Activated CD4-positive, alpha-beta T cell treated with anti-CD3 and anti-CD28 coated beads for 36 hours (primary cell): ENCODE measurements at regions of chr7 and their contacts with region 1.

Region 1: DNA sequence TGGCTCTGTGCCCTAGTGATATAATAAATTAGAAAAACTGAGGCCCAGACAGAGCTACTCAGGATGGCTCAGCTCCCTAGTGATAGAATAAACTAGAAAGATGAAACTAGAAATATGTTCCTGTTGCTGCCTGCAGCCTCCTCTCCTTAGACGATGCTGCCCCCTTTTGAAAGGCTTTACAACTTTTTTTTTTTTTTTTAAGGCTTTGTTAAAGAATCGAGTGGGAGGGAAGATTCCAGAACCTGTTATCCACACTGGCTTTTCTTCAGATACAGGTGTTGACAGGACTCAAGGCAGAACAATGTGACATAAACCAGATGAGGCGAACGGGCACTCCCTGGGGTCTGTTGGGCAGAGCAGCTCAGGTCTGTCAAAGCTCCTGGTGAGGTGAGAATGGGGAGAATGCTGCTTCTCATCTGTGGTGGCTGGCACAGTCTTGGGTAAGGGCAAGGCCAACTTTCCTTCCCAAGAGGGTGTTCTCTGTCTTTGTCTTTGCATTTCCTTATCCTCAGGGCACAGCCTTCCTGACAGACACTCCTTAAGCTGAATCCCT is 175.1 kb downstream of the COBL start:
- DNase-seq: peak; percentile 40
- ATAC-seq: peak; percentile 77
- H3K4me3 Mint-ChIP-seq: no peak overlapping the region
- H3K27ac Mint-ChIP-seq: no peak overlapping the region
- H3K4me1 Mint-ChIP-seq: peaks cover 23% of the 10 kb centered on the region
- H3K27me3 Mint-ChIP-seq: peaks cover 3% of the 10 kb centered on the region

Region 2: DNA sequence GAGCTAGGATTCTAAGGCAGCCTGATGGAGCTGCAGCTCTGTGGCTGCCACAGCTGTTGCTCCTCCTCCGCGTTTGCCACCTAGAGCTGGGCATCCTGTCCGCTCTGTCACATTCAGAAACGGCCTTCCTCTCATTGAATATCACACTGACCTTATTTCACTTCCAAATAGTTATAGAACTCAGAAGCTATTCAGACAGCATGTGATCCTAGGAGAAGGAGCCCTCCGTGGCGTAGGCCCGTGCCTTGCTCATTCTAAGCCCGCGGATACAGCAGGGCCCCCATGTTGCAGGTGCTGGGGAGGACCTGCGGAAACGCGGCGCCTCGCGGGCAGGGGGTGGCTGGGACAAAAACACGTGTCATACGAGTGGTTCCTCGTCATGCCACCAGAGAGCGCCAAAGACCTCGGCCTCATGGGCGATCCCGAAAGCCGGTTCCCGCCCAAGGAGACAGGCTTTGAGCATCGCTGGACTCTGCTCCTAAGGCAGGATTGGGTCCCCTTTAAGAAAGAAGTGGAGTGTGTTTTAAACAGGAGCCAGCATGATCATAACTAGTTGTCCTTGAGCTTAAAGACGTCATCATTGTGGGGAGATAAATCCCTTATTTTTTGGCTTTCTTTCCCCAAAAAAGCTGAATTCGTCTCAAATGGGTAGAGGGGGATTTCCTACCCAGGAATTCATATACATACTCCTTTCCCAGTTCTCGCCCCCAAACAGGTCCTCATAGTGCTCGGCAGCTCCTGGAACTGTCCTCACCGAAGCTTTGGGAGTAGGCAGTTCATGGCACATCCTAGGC is 673.5 kb before region 1 on chr7:
- CTCF ChIA-PET with region 1: interaction called, 7 read pairs
- POLR2A ChIA-PET with region 1: no interaction called
- intact Hi-C with region 1: loop called (anchors 1 kb)
- DNase-seq: peak; percentile 92
- ATAC-seq: peak; percentile 95
- H3K4me3 Mint-ChIP-seq: peak overlapping the region; percentile 11
- H3K27ac Mint-ChIP-seq: peak overlapping the region; percentile 59
- H3K4me1 Mint-ChIP-seq: peaks cover 13% of the 10 kb centered on the region
- H3K27me3 Mint-ChIP-seq: peaks cover 5% of the 10 kb centered on the region

Region 3: GRCh38 chr7:50696810-50697582 is 444.5 kb before region 1 on chr7:
- CTCF ChIA-PET with region 1: interaction called, 5 read pairs
- POLR2A ChIA-PET with region 1: no interaction called
- intact Hi-C with region 1: loop called (anchors 1 to 10 kb)
- DNase-seq: peak; percentile 27
- ATAC-seq: peak; percentile 33
- H3K4me3 Mint-ChIP-seq: no peak overlapping the region
- H3K27ac Mint-ChIP-seq: no peak overlapping the region
- H3K4me1 Mint-ChIP-seq: peaks cover 13% of the 10 kb centered on the region
- H3K27me3 Mint-ChIP-seq: peaks cover 3% of the 10 kb centered on the region

Region 4: DNA sequence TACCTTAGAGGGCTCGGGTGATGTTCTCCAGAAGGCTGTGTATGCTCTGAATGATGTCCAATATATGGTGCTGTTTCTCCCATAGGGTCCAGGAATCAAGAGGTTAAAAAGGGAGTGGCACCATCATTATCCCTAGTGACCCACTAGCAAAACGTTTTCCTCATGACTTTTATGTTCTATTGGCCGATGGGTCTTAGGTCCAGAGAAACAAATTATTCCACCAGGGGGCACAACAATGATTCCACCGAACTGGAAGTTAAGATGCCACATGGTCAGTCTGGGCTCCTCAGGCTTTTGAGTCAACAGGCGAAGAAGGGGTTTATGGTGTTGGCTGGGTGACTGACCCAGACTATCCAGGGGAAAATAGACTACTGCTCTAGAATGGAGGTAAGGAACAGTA is 81.0 kb before region 1 on chr7:
- CTCF ChIA-PET with region 1: interaction called, 6 read pairs
- POLR2A ChIA-PET with region 1: no interaction called
- intact Hi-C with region 1: loop called (anchors 2 to 5 kb)
- DNase-seq: no peak
- ATAC-seq: no peak
- H3K4me3 Mint-ChIP-seq: no peak overlapping the region
- H3K27ac Mint-ChIP-seq: no peak overlapping the region
- H3K4me1 Mint-ChIP-seq: no peaks in the 10 kb centered on the region
- H3K27me3 Mint-ChIP-seq: no peaks in the 10 kb centered on the region

Region 5: DNA sequence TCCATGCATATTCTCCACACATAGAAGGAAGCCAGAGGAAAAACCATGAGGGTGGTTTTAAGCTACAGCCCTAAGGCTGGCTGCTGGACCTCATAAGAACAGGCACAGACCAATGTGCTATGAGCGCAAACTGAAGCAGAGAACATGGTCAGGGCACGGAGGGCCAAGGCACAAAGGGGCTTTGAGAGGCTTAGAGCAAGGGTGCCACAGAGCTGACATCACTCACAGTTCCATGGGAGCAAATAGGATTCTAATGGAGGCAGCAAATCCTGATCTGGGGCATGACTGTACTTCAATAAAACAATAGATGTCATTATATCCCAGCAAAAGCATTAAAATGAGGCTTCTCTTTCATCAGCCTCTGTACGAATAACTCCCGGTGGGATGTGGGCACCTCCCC is 12.7 kb after region 1 on chr7:
- CTCF ChIA-PET with region 1: interaction called, 72 read pairs
- POLR2A ChIA-PET with region 1: no interaction called
- intact Hi-C with region 1: no loop called
- DNase-seq: no peak
- ATAC-seq: no peak
- H3K4me3 Mint-ChIP-seq: no peak overlapping the region
- H3K27ac Mint-ChIP-seq: no peak overlapping the region
- H3K4me1 Mint-ChIP-seq: no peaks in the 10 kb centered on the region
- H3K27me3 Mint-ChIP-seq: peaks cover 3% of the 10 kb centered on the region

Region 6: GRCh38 chr7:51324206-51324884 is 182.8 kb after region 1 on chr7:
- CTCF ChIA-PET with region 1: no interaction called
- POLR2A ChIA-PET with region 1: no interaction called
- intact Hi-C with region 1: no loop called
- DNase-seq: no peak
- ATAC-seq: no peak
- H3K4me3 Mint-ChIP-seq: no peak overlapping the region
- H3K27ac Mint-ChIP-seq: no peak overlapping the region
- H3K4me1 Mint-ChIP-seq: no peaks in the 10 kb centered on the region
- H3K27me3 Mint-ChIP-seq: peaks cover 10% of the 10 kb centered on the region